ENCODE measurements at regions of chr1 and their contacts with region 1.

Region 1: DNA sequence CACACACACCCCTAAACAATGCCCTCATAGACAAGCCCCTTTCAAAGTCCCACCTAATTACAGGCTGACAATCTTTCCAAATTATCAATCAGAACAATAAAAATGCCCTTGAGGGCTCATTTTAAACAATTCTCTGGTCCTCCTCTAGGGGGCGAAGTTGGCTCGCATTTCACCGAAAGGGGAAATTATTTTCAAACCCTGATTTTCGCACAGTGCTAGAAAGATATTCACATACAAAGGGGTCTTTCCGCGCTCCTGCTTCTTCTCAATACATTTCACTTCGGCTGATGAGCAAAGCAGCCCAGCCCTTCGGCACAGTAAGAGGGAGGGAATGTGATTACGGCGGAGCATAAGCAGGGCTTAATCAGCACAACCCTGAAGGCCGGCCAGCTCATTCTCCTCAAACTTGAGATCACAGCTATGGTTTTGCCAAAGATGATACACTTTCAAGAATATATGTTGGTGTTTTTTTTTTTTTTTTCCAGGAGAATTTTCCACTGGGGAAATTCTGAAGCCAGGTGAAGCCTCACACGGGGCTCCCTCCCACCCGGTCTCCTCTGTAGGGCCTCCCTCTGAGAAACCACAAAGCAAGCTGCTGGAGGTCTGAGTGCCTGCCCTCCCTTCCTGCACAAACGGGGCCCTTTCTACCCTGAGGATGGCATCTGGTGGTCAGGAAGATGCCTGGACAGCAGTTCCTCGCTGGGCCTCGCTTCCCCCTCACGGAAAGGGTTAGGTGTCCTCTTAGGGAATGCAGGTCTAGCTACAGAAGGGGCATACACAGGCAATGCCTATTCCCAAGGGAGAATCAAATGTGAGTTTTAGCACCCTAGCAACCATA is 66.9 kb downstream of the GNG12 start:
- DNase-seq: peak; percentile 35
- H3K4me3 ChIP-seq: peak overlapping the region; percentile 6 to 49; a peak in 3 of 4 replicates
- H3K27ac ChIP-seq: peak overlapping the region in 1 of 2 experiments; percentile 85; a peak in 3 of 4 replicates
- H3K4me1 ChIP-seq: peaks cover 8 to 13% of the 10 kb centered on the region in 2 experiments; a peak in 3 of 4 replicates
- H3K27me3 ChIP-seq: no peaks in the 10 kb centered on the region
- CTCF ChIP-seq: peak; percentile 91
- EP300 ChIP-seq: no peak
- RAD21 ChIP-seq: peak; percentile 82

Region 2: DNA sequence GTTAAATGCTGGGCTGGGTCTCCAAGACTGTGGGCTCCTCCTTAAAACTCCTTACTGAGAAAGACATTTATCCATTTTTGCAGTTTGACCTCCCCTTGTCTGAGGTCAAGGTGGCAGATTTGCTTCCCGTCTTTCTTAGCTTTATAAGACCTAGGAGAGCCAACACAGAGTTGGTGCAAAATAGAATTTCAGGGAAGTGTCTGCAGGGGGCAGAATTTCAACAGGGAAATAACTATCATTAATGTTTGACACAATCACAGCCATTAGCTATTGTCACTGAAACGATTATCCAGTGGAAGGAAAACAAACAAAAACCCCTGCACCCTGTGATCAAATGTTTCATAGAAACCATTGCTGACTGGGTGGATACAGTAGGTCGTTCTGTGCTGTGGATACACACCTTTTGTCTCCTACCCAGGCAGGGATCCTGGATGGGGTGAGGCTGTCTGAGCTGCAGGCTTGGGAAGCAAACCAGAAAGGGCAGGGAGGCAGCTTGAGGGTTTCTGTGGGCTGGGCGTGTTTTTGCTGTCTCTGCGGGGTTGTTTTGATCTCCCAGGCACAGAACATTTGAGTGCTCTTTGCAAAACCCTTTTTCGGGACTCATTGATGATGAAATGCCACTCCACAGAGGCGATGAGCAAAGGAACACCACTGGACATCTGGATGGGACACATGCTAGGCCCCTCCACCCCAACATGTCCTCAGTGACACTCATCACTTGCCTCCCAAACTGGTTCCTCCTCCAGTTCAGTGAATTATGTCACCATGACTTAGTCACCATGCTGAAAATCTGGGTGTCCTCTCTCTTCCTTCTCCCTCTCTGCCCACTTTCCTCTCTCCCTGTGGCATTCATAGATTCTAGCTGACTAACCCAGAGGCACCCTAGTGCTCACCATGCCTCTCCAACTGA is 242.0 kb before region 1 on chr1:
- CTCF ChIA-PET with region 1: interaction called, 70 read pairs
- POLR2A ChIA-PET with region 1: no interaction called
- DNase-seq: no peak
- H3K4me3 ChIP-seq: no peak overlapping the region
- H3K27ac ChIP-seq: no peak overlapping the region
- H3K4me1 ChIP-seq: no peaks in the 10 kb centered on the region
- H3K27me3 ChIP-seq: no peaks in the 10 kb centered on the region
- CTCF ChIP-seq: peak; percentile 35
- EP300 ChIP-seq: no peak
- RAD21 ChIP-seq: no peak

Region 3: DNA sequence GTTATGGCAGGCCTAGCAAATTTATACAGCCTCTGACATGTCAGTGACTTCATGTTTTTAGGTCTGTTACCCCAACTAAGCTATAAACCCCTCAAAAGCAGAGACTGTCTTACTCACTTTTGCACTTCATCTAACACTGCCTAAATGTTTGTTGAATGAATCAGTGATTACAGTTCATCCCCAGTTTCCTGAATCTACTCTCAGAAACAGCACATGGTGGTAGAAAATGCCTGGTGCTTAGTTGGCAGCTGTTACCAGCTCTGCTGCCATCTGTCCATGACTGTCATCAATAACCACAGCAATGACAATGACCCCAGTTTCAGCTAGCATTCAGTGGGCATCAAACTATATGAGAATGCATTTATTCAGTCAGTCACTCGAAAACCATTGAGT is 225.6 kb before region 1 on chr1:
- CTCF ChIA-PET with region 1: interaction called, 284 read pairs
- POLR2A ChIA-PET with region 1: no interaction called
- DNase-seq: no peak
- H3K4me3 ChIP-seq: no peak overlapping the region
- H3K27ac ChIP-seq: no peak overlapping the region
- H3K4me1 ChIP-seq: no peaks in the 10 kb centered on the region; a peak in 1 of 4 replicates
- H3K27me3 ChIP-seq: no peaks in the 10 kb centered on the region
- CTCF ChIP-seq: no peak
- EP300 ChIP-seq: no peak
- RAD21 ChIP-seq: no peak

Region 4: DNA sequence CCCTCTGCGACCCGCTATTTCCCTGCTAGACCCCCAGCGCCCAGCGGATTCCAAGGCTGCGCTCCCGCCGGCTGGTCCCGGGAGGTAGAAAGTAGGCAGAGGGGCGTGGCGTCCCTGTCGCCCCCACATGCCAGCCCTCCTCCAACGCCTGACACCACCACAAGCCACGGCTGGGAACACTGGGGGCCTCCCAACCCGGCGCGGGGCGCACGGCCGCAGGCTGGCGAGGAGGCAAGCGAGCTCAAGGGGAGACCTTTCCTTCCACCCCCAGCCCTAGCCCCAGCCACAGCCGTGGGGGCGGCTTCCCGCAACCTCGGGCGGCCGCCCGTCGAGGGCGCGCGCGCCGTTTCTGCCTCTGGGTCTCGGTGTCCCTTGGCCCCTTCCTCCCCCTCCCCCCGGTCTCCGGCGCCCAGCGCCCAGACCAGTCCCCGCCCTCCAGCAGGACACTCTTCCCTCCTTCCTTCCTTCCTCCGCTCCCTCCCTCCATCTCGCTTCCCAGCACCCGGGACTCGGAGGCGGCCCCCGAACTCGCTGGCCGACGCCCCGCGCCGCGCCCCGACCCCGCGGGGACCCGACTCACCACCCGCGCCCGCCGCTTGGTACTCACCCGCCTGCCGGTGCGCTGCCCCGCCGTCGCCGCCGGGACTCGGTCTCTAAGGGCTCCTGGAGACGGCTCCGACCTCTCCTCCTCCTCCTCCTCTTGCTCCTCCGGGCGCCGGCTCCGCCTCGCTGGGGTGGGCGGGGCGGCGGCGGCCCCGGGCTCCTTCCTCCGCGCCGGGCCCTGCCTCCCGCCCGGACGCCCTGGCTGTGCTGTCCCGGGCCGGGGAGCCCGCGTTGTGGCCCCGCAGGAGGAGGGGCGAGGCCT is 66.6 kb after region 1 on chr1 and contains the start of gene GNG12:
- CTCF ChIA-PET with region 1: interaction called, 36 read pairs
- POLR2A ChIA-PET with region 1: no interaction called
- DNase-seq: peak; percentile 90
- H3K4me3 ChIP-seq: peak within 1 kb of the TSS; percentile 77 to 91
- H3K27ac ChIP-seq: peak within 1 kb of the TSS; percentile 84 to 87
- H3K4me1 ChIP-seq: peaks cover 0 to 27% of the 10 kb centered on the region in 2 experiments; a peak in 3 of 4 replicates
- H3K27me3 ChIP-seq: no peaks in the 10 kb centered on the region
- CTCF ChIP-seq: no peak
- EP300 ChIP-seq: no peak
- RAD21 ChIP-seq: no peak
- polyA plus RNA-seq, gene GNG12: 41.2 and 56.1 TPM in 2 replicates

Region 5: DNA sequence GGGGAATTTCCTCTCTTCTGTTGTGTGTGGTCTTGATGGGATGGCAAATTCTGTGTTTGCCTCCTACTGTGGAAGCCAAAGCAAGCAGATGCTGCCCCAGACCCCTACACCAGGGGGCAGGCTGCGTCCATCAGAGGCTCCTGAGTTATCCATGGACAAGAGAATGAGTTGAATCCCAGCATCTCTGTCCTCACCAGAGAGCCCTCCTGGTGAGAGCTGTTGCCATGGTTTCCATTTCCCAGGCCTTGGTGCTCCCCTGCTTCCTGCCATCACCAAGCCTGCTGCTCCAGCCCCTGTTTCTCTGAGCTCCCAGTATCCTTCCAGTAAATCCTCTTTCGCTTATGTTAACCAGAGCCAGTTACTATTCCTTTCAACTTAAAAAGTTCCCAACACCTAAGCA is 87.3 kb after region 1 on chr1:
- CTCF ChIA-PET with region 1: interaction called, 60 read pairs
- POLR2A ChIA-PET with region 1: no interaction called
- DNase-seq: peak; percentile 77
- H3K4me3 ChIP-seq: peak overlapping the region in 1 of 2 experiments; percentile 2; a peak in 1 of 4 replicates
- H3K27ac ChIP-seq: peak overlapping the region in 1 of 2 experiments; percentile 43; a peak in 2 of 4 replicates
- H3K4me1 ChIP-seq: peaks cover 4 to 10% of the 10 kb centered on the region in 2 experiments
- H3K27me3 ChIP-seq: no peaks in the 10 kb centered on the region
- CTCF ChIP-seq: peak; percentile 97
- EP300 ChIP-seq: no peak
- RAD21 ChIP-seq: peak; percentile 99

Region 6: GRCh38 chr1:68093737-68094136 is 327.4 kb after region 1 on chr1:
- CTCF ChIA-PET with region 1: interaction called, 16 read pairs
- POLR2A ChIA-PET with region 1: no interaction called
- DNase-seq: no peak
- H3K4me3 ChIP-seq: no peak overlapping the region
- H3K27ac ChIP-seq: no peak overlapping the region
- H3K4me1 ChIP-seq: no peaks in the 10 kb centered on the region; a peak in 1 of 4 replicates
- H3K27me3 ChIP-seq: no peaks in the 10 kb centered on the region
- CTCF ChIP-seq: no peak
- EP300 ChIP-seq: no peak
- RAD21 ChIP-seq: no peak